ENCODE measurements at regions of chr9 and their contacts with region 1.

Region 1: DNA sequence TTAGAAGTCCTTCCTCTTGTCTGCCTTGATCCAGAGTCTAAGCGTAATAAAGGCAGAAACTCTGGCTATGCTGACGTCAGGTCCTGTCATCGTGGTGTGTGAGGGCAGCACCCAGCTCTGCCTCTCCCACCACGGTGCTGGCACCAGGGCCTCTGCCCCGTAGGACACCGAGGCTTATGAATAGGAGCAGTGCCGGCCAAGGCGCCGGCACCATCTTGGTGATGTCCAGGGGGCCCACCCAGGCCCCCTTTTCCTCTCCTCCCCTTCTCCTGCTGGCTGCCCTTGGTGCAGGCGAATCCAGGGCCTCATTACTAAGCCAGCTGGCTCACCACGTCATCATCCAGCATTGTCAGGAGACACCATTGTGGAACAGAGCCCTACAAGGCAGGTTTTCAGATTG is 252.3 kb downstream of the FANCC start:
- DNase-seq: no peak
- H3K4me3 ChIP-seq: no peak overlapping the region
- H3K27ac ChIP-seq: peak overlapping the region; percentile 79 to 97 (median 87)
- H3K4me1 ChIP-seq: peaks cover 45 to 100% (median 95%) of the 10 kb centered on the region in 3 donors
- H3K27me3 ChIP-seq: no peaks in the 10 kb centered on the region
- CTCF ChIP-seq: no peak
- POLR2A ChIP-seq: no peak

Region 2: DNA sequence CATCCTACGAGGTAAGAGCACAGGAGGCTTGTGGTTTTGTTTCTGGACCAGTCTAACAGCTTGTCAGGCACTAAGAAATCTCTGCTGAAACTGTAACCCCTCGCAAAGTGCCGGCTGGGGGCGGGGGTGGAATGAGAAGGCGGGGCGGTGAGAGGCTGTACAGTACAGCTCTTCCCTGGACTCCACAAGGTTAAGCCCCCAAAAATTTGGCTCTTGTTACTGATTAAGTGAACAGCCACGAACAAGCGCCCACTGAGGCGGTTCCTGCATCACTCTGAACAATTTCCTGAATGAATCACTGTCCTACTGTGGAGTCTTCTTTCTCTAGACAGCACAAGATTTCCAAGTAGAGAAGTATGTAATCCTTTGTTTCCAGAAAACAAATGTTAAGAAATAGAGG is 478.4 kb before region 1 on chr9:
- intact Hi-C with region 1: no loop called
- DNase-seq: no peak
- H3K4me3 ChIP-seq: peak overlapping the region in 1 of 4 donors; percentile 34
- H3K27ac ChIP-seq: no peak overlapping the region
- H3K4me1 ChIP-seq: no peaks in the 10 kb centered on the region
- H3K27me3 ChIP-seq: peaks cover 0 to 21% (median 0%) of the 10 kb centered on the region in 4 donors
- CTCF ChIP-seq: no peak
- POLR2A ChIP-seq: no peak

Region 3: GRCh38 chr9:95018099-95018936 is 46.9 kb before region 1 on chr9:
- intact Hi-C with region 1: loop called (anchors 10 kb)
- DNase-seq: no peak
- H3K4me3 ChIP-seq: peak overlapping the region in 2 of 4 donors; percentile 14 to 40
- H3K27ac ChIP-seq: peak overlapping the region; percentile 83 to 99 (median 92)
- H3K4me1 ChIP-seq: peaks cover 35 to 100% (median 82%) of the 10 kb centered on the region in 3 donors
- H3K27me3 ChIP-seq: no peaks in the 10 kb centered on the region
- CTCF ChIP-seq: no peak
- POLR2A ChIP-seq: peak in 1 of 4 donors; percentile 15